ENCODE measurements at regions of chr3 and their contacts with region 1.

Region 1: DNA sequence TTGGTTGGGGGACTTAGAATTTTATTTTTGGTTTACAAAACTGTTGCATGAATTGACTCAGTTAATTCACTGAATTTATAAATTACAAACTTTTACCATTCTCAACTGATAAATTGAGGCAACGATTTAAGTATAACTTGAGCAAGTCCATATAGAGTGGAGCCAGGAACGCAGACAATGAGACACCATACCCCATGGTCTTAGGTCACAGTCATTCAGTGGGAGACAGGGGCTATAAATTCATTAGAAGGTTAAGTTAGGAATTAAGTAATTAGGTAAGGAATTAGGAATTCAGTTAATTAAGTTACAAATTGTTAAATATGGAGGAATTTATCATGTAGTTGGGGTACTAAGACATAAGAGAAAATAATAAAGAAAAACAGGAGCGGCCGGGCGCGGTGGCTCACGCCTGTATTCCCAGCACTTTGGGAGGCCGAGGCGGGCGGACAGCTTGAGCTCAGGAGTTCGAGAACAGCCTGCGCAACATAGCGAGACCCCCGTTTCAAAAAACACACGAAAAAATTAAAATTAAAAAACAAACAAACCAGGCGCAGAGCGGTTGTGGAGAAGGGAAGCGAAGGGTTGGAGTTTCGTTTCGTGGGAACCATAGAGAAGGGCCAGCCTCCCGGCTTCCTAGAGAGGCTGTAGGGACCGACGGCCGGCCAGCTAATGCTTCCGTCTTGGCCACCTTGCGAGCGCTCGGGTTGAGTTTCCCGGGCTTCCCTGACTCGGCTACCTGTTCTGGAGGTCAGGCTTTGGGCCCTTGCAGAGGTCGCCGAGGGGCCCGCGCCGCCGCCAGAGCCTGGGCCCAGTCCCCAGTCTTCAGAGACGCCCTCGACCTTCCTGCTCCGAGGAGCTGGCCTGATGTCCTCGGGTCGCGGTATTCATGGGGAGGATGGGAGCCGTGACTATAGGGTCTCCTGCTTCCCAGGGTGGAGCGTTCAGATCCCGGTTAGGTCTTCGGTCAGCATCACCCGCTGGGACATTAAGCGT is at the start of gene ZNF619:
- DNase-seq: peak; percentile 83
- ATAC-seq: peak; percentile 96
- total RNA-seq, gene ZNF619: 4.3 TPM

Region 2: DNA sequence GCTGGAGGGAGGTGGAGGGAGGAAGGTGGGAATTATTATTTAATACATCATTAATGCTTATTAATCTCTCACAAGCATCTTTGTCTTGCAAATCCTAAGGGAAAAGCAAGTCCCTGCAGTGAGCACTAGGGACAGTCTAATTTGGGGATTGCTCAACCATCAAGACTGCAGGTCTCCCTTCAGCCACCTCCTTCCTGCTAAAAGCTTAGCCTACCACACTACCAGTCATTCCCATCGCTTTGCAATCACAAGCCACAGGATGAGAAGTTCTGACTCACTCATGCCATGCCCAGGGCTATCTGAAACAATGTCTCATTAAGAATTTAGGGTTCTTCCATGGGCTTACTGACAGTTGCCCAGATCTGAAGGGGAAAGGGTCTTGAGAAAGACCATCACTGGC is 218.2 kb before region 1 on chr3:
- intact Hi-C with region 1: no loop called
- DNase-seq: no peak
- ATAC-seq: no peak

Region 3: GRCh38 chr3:40524568-40525285 is 48.0 kb after region 1 on chr3 and contains the start of gene ZNF621:
- intact Hi-C with region 1: loop called (anchors 2 kb)
- DNase-seq: peak; percentile 96
- ATAC-seq: peak; percentile 100
- total RNA-seq, gene ZNF621: 8.6 TPM